ENCODE measurements at regions of chr10 and their contacts with region 1.

Region 1: DNA sequence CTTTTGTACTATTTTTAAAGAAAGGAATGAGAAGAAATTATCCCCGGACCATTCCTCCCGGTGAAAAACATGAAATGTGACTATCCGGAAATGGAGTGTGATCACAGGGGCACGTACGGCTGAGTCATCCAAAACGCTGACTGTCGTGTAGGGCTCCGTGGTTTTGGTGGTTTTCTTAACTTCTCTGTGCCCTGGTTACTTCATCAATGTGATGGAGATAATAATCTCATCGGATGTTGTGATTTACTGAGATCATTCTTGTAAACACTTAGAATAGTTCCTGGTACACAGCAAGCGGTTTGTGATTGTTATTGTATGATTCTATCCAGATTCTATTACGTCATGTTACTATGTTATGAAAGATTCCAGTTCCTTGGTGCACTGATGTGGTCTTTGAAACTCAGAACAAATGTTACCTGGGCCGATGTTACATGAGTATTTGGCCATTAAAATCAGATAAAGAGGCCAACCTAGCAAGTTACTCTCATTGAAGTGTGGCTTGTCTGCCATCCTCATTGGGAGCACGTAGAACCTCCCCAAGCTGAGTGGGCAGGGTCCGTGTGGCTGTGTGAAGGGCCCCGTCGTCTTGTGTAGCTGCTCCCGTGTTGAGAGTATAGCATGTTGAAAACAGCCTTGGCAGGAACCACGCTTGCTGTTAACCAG is 99.5 kb downstream of the CAMK1D start:
- DNase-seq: peak; percentile 86
- H3K4me3 Mint-ChIP-seq: peak overlapping the region; percentile 62
- H3K27ac Mint-ChIP-seq: peak overlapping the region; percentile 52
- H3K4me1 Mint-ChIP-seq: peaks cover 40% of the 10 kb centered on the region
- H3K27me3 Mint-ChIP-seq: no peaks in the 10 kb centered on the region

Region 2: GRCh38 chr10:11424456-11425297 is 1024.2 kb before region 1 on chr10:
- CTCF ChIA-PET with region 1: no interaction called
- intact Hi-C with region 1: no loop called
- DNase-seq: no peak
- H3K4me3 Mint-ChIP-seq: no peak overlapping the region
- H3K27ac Mint-ChIP-seq: no peak overlapping the region
- H3K4me1 Mint-ChIP-seq: peaks cover 8% of the 10 kb centered on the region
- H3K27me3 Mint-ChIP-seq: no peaks in the 10 kb centered on the region

Region 3: DNA sequence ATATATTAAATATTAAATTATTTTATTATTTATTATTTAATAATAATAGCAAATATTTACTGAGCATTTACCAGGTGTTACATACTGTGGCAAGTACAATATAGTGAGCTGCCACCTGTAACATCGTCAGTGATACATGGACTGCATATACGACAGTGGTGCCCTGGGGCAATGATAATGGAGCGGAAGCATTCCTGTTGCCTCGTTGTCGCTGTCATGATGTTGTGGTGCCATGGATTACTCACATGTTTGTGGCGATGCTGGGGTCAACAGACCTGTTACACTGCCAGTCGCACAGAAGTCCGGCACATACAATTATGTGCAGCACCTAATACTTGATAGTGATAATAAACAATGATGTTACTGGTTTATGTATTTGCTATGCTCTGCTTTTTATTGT is 78.9 kb before region 1 on chr10:
- CTCF ChIA-PET with region 1: no interaction called
- intact Hi-C with region 1: loop called (anchors 2 kb)
- DNase-seq: no peak
- H3K4me3 Mint-ChIP-seq: no peak overlapping the region
- H3K27ac Mint-ChIP-seq: no peak overlapping the region
- H3K4me1 Mint-ChIP-seq: peaks cover 26% of the 10 kb centered on the region
- H3K27me3 Mint-ChIP-seq: no peaks in the 10 kb centered on the region

Region 4: DNA sequence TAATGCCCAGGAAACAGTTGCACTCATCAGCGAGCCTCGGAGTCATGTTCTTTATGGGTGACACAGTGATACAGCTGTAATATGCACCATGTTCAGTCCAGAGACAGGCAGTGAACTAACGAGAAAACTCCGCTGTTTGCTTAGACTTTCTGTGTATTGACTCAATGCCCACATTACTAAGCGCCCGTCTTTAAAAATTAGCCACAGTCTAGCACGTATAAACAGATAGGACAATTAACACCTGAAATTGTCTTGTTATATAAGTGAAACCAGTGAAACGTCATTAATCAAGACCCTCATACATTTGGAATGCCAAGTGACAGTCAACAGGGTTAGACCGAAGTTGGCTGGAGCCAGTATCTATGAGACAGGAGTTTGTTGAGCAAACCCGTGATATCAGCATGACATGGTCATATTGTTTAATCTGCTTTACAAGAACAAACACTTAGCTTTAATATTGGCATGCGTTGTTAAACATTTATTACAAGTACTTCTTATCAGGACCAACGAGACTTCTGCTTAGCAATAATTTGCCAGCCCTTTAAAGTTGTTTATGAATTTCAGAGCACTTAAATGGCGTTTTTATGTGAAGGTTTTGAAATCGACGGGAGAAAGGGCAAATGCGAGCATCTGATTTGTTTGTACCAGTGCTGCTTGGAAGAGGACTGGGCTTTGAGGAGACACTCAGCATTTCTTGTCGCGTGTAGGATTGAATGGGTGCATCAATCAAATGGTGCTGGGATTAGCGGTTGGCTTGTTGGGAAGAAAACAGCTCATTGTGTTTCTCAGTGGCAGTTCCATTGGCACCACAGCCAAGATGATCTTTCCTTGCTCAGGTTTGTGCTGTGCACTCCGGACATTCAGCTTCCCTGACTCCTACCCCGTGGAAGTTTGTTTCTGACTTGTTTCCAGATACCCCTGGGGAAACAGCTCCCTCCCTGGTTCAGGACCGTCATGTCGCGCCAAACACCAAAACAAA is 43.2 kb before region 1 on chr10:
- CTCF ChIA-PET with region 1: no interaction called
- intact Hi-C with region 1: loop called (anchors 1 kb)
- DNase-seq: no peak
- H3K4me3 Mint-ChIP-seq: no peak overlapping the region
- H3K27ac Mint-ChIP-seq: peak overlapping the region; percentile 14
- H3K4me1 Mint-ChIP-seq: peaks cover 27% of the 10 kb centered on the region
- H3K27me3 Mint-ChIP-seq: no peaks in the 10 kb centered on the region

Region 5: GRCh38 chr10:12419262-12419847 is 29.5 kb before region 1 on chr10:
- CTCF ChIA-PET with region 1: no interaction called
- intact Hi-C with region 1: loop called (anchors 1 kb)
- DNase-seq: peak; percentile 90
- H3K4me3 Mint-ChIP-seq: no peak overlapping the region
- H3K27ac Mint-ChIP-seq: peak overlapping the region; percentile 46
- H3K4me1 Mint-ChIP-seq: peaks cover 30% of the 10 kb centered on the region
- H3K27me3 Mint-ChIP-seq: no peaks in the 10 kb centered on the region

Region 6: GRCh38 chr10:12726971-12727831 is 278.3 kb after region 1 on chr10:
- CTCF ChIA-PET with region 1: no interaction called
- intact Hi-C with region 1: loop called (anchors 1 kb)
- DNase-seq: peak; percentile 72
- H3K4me3 Mint-ChIP-seq: no peak overlapping the region
- H3K27ac Mint-ChIP-seq: peak overlapping the region; percentile 7
- H3K4me1 Mint-ChIP-seq: peaks cover 27% of the 10 kb centered on the region
- H3K27me3 Mint-ChIP-seq: no peaks in the 10 kb centered on the region

Measured in activated naive CD4-positive, alpha-beta T cell treated with anti-CD3 and anti-CD28 coated beads for 36 hours (primary cell).